MCF 10A (cell line): ENCODE measurements at regions of chr11 and their contacts with region 1.

Region 1: GRCh38 chr11:36817336-36817965 is 219.4 kb upstream of the RAG2 start:
- DNase-seq: peak; percentile 81
- H3K4me3 Mint-ChIP-seq: no peak overlapping the region
- H3K27ac Mint-ChIP-seq: no peak overlapping the region
- H3K4me1 Mint-ChIP-seq: peaks cover 10% of the 10 kb centered on the region
- H3K27me3 Mint-ChIP-seq: no peaks in the 10 kb centered on the region
- CTCF ChIP-seq: no peak

Region 2: GRCh38 chr11:36177836-36178235 is 639.6 kb before region 1 on chr11:
- CTCF ChIA-PET with region 1: no interaction called
- POLR2A ChIA-PET with region 1: no interaction called
- intact Hi-C with region 1: no loop called
- DNase-seq: no peak
- H3K4me3 Mint-ChIP-seq: no peak overlapping the region
- H3K27ac Mint-ChIP-seq: no peak overlapping the region
- H3K4me1 Mint-ChIP-seq: peaks cover 13% of the 10 kb centered on the region
- H3K27me3 Mint-ChIP-seq: no peaks in the 10 kb centered on the region
- CTCF ChIP-seq: no peak

Region 3: DNA sequence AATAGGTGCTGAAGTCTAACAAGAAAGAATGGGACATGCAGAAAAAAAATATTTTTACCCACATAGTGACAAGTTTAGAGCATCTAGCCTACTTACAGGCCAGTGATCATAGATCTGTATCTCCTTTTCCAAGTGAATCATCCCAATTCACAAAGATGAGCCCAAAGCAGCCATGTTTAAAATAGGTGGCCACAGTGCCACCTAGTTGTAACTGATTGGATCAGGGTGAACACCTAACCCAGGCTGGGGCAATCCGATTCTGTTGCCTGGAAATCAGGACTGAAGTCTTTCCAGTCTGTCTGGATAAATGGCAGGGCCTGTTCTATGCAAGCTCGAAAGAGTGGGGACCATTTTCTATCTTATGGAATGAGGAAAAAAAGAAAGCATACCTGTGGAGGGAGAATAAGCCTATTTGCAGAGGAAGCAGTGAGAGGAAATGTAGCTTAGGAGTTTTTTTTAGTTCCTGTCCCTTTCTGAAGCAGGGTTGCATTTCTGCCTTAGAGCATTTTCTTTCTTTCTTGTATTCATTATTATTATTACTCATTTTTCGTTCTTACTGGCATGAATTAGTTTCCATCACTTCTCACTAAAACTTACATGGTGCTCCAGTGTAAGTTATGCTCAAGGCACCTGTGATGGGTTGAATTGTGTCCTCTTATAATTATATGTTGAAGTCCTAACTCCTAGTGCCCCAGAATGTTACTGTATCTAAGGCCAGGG is 106.2 kb before region 1 on chr11:
- CTCF ChIA-PET with region 1: no interaction called
- POLR2A ChIA-PET with region 1: no interaction called
- intact Hi-C with region 1: no loop called
- DNase-seq: peak; percentile 18
- H3K4me3 Mint-ChIP-seq: no peak overlapping the region
- H3K27ac Mint-ChIP-seq: no peak overlapping the region
- H3K4me1 Mint-ChIP-seq: no peaks in the 10 kb centered on the region
- H3K27me3 Mint-ChIP-seq: peaks cover 36% of the 10 kb centered on the region
- CTCF ChIP-seq: no peak

Region 4: DNA sequence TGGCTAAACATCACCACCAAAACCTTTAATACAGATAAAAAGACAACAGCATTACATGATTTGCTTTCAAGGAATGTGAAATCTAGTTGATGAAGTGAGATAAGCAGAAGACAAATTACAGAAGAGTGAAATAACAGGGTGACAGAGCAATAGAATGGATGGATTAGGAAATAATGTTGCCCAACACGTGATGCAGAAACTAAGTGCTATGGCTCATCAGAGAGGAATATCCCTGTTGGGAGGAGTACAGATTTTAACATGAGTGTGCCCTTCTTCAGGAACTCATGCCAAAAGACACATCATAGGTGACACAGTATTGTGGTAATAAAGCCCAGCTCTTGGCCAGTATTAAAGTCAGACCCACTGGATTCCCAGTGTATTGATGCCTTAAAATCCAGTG is 42.8 kb before region 1 on chr11:
- CTCF ChIA-PET with region 1: interaction called, 8 read pairs
- POLR2A ChIA-PET with region 1: no interaction called
- intact Hi-C with region 1: loop called (anchors 2 kb)
- DNase-seq: peak; percentile 83
- H3K4me3 Mint-ChIP-seq: no peak overlapping the region
- H3K27ac Mint-ChIP-seq: peak overlapping the region; percentile 52
- H3K4me1 Mint-ChIP-seq: peaks cover 17% of the 10 kb centered on the region
- H3K27me3 Mint-ChIP-seq: no peaks in the 10 kb centered on the region
- CTCF ChIP-seq: no peak